ENCODE measurements at regions of chr7 and their contacts with region 1.

Region 1: DNA sequence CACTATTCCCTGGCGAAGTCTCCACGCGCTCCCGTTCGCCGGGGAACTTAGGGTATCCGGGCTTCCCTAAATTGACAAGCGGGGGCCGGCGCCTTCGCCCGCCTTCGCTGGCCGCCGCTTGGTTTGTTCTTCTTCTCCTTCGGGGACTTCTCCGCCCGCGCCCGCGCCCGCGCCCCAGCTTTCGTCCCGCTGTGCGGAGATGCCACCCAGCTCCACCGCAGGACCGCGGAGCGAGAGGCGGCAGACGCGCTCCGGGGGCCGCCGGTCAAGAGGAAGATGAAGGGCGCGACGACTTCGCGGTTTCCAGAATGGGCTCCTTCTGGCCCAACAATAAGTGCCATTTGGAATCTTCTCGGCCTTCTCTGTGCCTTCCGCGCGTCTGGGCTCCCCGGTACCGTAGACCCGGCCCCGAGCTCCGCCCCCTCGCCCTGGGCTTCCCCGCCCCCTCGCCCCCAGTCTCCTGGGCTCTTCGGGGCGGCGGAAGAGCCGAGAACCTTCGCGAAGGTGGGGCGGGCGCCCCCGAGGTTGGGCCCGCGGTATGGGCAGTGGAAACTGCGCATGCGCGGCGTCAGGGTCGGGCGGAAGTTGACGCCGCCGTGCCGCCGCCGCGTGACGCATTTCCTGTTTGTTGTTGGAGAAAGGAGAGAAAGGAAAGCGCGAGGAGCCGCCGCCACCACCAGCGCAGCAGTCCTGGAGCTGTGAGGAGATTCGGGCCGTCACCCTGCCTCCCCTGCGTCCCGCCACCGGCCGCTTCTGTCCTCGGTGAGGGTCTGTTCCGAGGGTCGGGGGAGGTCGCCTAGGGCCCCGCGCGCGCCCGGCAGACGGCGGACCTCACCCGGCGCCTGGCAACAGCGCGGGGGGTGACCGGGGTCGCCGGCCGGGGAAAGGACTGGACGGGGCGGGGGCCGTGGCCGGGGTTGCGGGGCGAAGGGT is at the start of gene DNAJB6:
- DNase-seq: peak; percentile 74
- ATAC-seq: peak; percentile 78
- H3K4me3 ChIP-seq: peak within 1 kb of the TSS; percentile 89
- H3K27ac ChIP-seq: peak within 1 kb of the TSS; percentile 66
- H3K4me1 ChIP-seq: peaks cover 22% of the 10 kb centered on the region
- H3K27me3 ChIP-seq: no peaks in the 10 kb centered on the region; a peak in 1 of 4 replicates
- CTCF ChIP-seq: no peak
- EP300 ChIP-seq: peak in 1 of 2 experiments; percentile 48; a peak in 1 of 4 replicates
- POLR2A ChIP-seq: peak; percentile 82
- RAD21 ChIP-seq: no peak
- polyA plus RNA-seq, gene DNAJB6: 38.1 to 38.2 TPM

Region 2: DNA sequence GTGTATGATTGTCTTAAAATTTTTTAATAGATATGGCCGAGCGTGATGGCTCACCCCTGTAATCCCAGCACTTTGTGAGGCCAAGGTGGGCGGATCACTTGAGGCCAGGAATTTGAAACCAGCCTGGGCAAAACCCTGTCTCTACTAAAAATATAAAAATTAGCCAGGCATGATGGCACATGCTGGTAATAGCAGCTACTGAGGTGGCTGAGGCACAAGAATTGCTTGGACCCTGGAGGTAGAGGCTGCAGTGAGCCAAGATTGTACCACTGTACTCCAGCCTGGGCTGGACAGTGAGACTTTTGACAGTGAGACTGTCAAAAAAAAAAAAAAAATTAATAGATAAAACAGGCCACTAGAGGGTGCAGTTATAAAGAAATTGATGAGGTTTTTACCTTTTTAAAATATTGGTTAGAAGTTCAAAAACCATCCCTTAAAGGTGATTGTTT is 366.7 kb before region 1 on chr7:
- CTCF ChIA-PET with region 1: interaction called, 11 read pairs
- POLR2A ChIA-PET with region 1: no interaction called
- RAD21 ChIA-PET with region 1: interaction called, 3 read pairs
- SMC1A ChIA-PET with region 1: no interaction called
- in situ Hi-C with region 1: no loop called
- intact Hi-C with region 1: no loop called
- DNase-seq: no peak
- ATAC-seq: peak; percentile 77
- H3K4me3 ChIP-seq: no peak overlapping the region
- H3K27ac ChIP-seq: no peak overlapping the region
- H3K4me1 ChIP-seq: no peaks in the 10 kb centered on the region
- H3K27me3 ChIP-seq: no peaks in the 10 kb centered on the region
- CTCF ChIP-seq: peak in 1 of 3 experiments; percentile 14; a peak in 2 of 6 replicates
- EP300 ChIP-seq: no peak
- POLR2A ChIP-seq: no peak
- RAD21 ChIP-seq: 0 out of 2 replicates have a peak, but pooled peaks have one; percentile 20

Region 3: GRCh38 chr7:157193274-157193673 is 143.4 kb before region 1 on chr7:
- CTCF ChIA-PET with region 1: no interaction called
- POLR2A ChIA-PET with region 1: no interaction called
- RAD21 ChIA-PET with region 1: no interaction called
- SMC1A ChIA-PET with region 1: no interaction called
- in situ Hi-C with region 1: no loop called
- intact Hi-C with region 1: no loop called
- DNase-seq: no peak
- ATAC-seq: no peak
- H3K4me3 ChIP-seq: no peak overlapping the region
- H3K27ac ChIP-seq: no peak overlapping the region
- H3K4me1 ChIP-seq: no peaks in the 10 kb centered on the region
- H3K27me3 ChIP-seq: no peaks in the 10 kb centered on the region
- CTCF ChIP-seq: no peak
- EP300 ChIP-seq: no peak
- POLR2A ChIP-seq: no peak
- RAD21 ChIP-seq: no peak

Region 4: DNA sequence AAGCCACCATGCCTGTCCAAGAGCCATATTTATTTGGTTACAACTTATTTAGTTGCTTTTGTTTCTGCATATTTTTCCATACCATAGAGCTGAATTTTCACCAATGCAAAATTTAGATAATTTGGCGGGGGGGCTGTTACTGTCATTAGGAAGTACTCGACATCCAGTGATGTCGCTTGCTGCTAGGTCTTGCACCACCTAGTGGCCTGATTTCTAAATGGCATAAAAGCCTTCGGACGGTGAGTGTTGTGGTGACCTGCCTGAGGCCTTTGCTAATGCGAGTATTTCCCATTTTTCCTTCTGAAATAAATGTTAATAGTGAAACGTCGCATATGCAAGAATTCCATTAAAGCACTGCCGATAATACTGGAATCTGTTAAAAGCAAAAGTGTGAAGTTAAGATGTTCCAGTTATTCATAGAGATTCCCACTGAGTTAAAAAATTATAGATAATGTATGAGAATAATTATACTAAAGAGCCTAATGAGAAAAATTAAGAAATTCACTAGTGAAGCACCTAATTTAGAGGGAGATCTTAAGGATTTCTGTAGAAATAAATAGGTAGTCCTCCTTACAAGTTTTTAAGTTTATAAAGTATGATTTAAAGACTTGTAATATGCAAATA is 85.9 kb before region 1 on chr7:
- CTCF ChIA-PET with region 1: interaction called, 13 read pairs
- POLR2A ChIA-PET with region 1: no interaction called
- RAD21 ChIA-PET with region 1: no interaction called
- SMC1A ChIA-PET with region 1: interaction called, 3 read pairs
- in situ Hi-C with region 1: no loop called
- intact Hi-C with region 1: no loop called
- DNase-seq: no peak
- ATAC-seq: peak; percentile 94
- H3K4me3 ChIP-seq: no peak overlapping the region
- H3K27ac ChIP-seq: no peak overlapping the region
- H3K4me1 ChIP-seq: no peaks in the 10 kb centered on the region
- H3K27me3 ChIP-seq: no peaks in the 10 kb centered on the region
- CTCF ChIP-seq: peak; percentile 69 to 84 (median 80)
- EP300 ChIP-seq: no peak
- POLR2A ChIP-seq: no peak
- RAD21 ChIP-seq: peak; percentile 46

Region 5: GRCh38 chr7:157301610-157302120 is 35.0 kb before region 1 on chr7:
- CTCF ChIA-PET with region 1: interaction called, 11 read pairs
- POLR2A ChIA-PET with region 1: interaction called, 5 read pairs
- RAD21 ChIA-PET with region 1: no interaction called
- SMC1A ChIA-PET with region 1: interaction called, 6 read pairs
- in situ Hi-C with region 1: no loop called
- intact Hi-C with region 1: loop called (anchors 2 kb)
- DNase-seq: no peak
- ATAC-seq: peak; percentile 4; the same call in 2 of the 3 replicates
- H3K4me3 ChIP-seq: 0 out of 2 replicates have a peak overlapping the region, but pooled peaks have one; percentile 14
- H3K27ac ChIP-seq: peak overlapping the region; percentile 87
- H3K4me1 ChIP-seq: peaks cover 16% of the 10 kb centered on the region
- H3K27me3 ChIP-seq: no peaks in the 10 kb centered on the region
- CTCF ChIP-seq: no peak
- EP300 ChIP-seq: no peak
- POLR2A ChIP-seq: no peak
- RAD21 ChIP-seq: no peak

Region 6: DNA sequence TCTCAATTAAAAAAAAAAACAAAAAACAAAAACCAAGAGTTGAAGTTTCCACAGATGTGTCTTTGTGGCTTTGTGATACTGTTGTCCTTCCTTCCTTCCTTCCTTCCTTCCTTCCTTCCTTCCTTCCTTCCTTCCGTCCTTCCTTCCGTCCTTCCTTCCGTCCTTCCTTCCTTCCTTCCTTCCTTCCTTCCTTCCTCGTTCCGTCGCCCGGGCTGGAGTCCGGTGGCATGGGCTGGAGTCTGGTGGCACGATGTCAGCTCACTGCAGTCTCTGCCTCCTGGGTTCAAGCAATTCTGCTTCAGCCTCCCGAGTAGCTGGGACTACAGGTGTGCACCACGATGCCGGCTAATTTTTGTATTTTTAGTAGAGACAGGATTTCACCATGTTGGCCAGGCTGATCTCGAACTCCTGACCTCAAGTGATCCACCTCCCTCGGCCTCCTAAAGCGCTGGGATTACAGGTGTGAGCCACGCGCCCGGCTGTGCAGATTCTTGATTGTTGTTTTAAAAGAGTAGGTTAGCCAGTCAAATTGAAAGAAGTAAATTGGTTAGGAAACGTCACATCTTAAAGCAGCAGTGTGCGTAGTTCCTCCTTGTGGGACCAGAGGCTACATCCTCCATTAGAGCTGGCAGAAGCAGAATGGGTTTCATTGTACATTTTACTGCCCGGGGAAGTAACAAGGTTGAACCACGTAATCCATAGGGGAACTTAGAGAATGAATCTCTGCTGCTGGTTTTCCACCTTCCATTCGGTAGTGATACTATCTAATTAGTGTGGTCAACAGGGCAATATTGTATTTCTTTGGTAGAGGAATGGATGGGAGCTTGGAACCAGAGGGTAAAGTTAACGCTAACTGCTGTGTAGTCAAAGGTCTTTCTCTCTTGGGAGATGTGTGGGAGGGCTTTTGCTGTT is 20.7 kb after region 1 on chr7:
- CTCF ChIA-PET with region 1: interaction called, 9 read pairs
- POLR2A ChIA-PET with region 1: interaction called, 21 read pairs
- RAD21 ChIA-PET with region 1: interaction called, 4 read pairs
- SMC1A ChIA-PET with region 1: interaction called, 9 read pairs
- in situ Hi-C with region 1: no loop called
- intact Hi-C with region 1: no loop called
- DNase-seq: peak; percentile 65
- ATAC-seq: peak; percentile 93
- H3K4me3 ChIP-seq: no peak overlapping the region
- H3K27ac ChIP-seq: peak overlapping the region; percentile 33
- H3K4me1 ChIP-seq: peaks cover 19% of the 10 kb centered on the region
- H3K27me3 ChIP-seq: no peaks in the 10 kb centered on the region
- CTCF ChIP-seq: no peak
- EP300 ChIP-seq: peak; percentile 58 to 69; a peak in 2 of 4 replicates
- POLR2A ChIP-seq: no peak
- RAD21 ChIP-seq: no peak